Caco-2 (cell line): ENCODE measurements at regions of chr5 and their contacts with region 1.

Region 1: GRCh38 chr5:154647114-154647760 is 107.9 kb upstream of the LARP1 start:
- DNase-seq: peak; percentile 87 to 92
- H3K4me3 ChIP-seq: peak overlapping the region; percentile 15
- H3K4me3 Mint-ChIP-seq: peak overlapping the region; percentile 67
- H3K27ac Mint-ChIP-seq: peak overlapping the region; percentile 88
- H3K4me1 ChIP-seq: peaks cover 27% of the 10 kb centered on the region
- H3K4me1 Mint-ChIP-seq: peaks cover 17% of the 10 kb centered on the region
- H3K27me3 ChIP-seq: no peaks in the 10 kb centered on the region
- H3K27me3 Mint-ChIP-seq: no peaks in the 10 kb centered on the region
- CTCF ChIP-seq: no peak

Region 2: GRCh38 chr5:154683101-154683880 is 36.1 kb after region 1 on chr5:
- CTCF ChIA-PET with region 1: interaction called, 7 read pairs
- POLR2A ChIA-PET with region 1: interaction called, 13 read pairs
- intact Hi-C with region 1: no loop called
- DNase-seq: no peak
- H3K4me3 ChIP-seq: peak overlapping the region; percentile 58
- H3K4me3 Mint-ChIP-seq: peak overlapping the region; percentile 89
- H3K27ac Mint-ChIP-seq: peak overlapping the region; percentile 95
- H3K4me1 ChIP-seq: peaks cover 12% of the 10 kb centered on the region; the same call in 1 of the 2 replicates
- H3K4me1 Mint-ChIP-seq: peaks cover 11% of the 10 kb centered on the region
- H3K27me3 ChIP-seq: no peaks in the 10 kb centered on the region
- H3K27me3 Mint-ChIP-seq: no peaks in the 10 kb centered on the region
- CTCF ChIP-seq: no peak

Region 3: DNA sequence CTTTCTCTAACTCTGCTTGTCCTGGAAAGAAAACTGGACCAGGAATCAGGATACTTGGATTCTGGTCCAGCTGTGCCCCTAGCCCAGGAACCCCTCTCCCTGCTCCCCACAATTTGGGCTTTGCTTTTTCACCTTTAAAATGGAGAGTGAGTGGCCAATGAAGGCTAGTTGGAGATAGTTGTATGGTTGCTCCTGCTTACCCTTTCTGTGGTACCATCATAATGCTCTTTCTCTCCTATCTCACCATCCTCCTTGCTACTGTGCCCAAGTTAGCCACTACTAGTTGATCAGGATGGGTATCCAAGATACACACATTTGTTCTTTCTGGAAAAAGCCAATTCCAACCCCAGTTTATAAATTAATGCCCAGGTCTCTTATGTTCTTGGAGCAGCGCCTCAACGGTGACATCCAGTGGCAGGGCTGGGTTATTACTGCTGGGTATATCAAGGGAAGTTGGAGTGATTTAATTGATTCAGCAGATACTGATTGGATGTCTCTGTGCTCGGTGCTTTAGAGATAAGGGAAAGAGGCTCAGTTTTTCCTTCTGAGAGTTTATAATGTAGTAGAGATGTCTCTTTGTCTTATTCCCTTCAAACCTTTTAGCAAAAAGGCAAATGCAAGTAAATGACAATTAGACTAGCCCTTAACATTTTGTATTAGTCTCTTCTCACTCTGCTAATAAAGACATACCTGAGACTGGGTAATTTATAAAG is 164.6 kb after region 1 on chr5:
- CTCF ChIA-PET with region 1: interaction called, 3 read pairs
- POLR2A ChIA-PET with region 1: no interaction called
- intact Hi-C with region 1: loop called (anchors 1 kb)
- DNase-seq: peak; percentile 62 to 66
- H3K4me3 ChIP-seq: no peak overlapping the region
- H3K4me3 Mint-ChIP-seq: no peak overlapping the region
- H3K27ac Mint-ChIP-seq: peak overlapping the region; percentile 36
- H3K4me1 ChIP-seq: peaks cover 9% of the 10 kb centered on the region; the same call in 1 of the 2 replicates
- H3K4me1 Mint-ChIP-seq: peaks cover 10% of the 10 kb centered on the region
- H3K27me3 ChIP-seq: no peaks in the 10 kb centered on the region
- H3K27me3 Mint-ChIP-seq: no peaks in the 10 kb centered on the region
- CTCF ChIP-seq: peak; percentile 89 to 91

Region 4: GRCh38 chr5:154857530-154858296 is 210.5 kb after region 1 on chr5:
- CTCF ChIA-PET with region 1: interaction called, 7 read pairs
- POLR2A ChIA-PET with region 1: interaction called, 6 read pairs
- intact Hi-C with region 1: loop called (anchors 2 kb)
- DNase-seq: peak; percentile 93 to 95
- H3K4me3 ChIP-seq: peak overlapping the region; percentile 51
- H3K4me3 Mint-ChIP-seq: peak overlapping the region; percentile 94
- H3K27ac Mint-ChIP-seq: peak overlapping the region; percentile 95
- H3K4me1 ChIP-seq: peaks cover 7% of the 10 kb centered on the region
- H3K4me1 Mint-ChIP-seq: peaks cover 12% of the 10 kb centered on the region
- H3K27me3 ChIP-seq: no peaks in the 10 kb centered on the region
- H3K27me3 Mint-ChIP-seq: no peaks in the 10 kb centered on the region
- CTCF ChIP-seq: peak in 1 of 2 experiments; percentile 29

Region 5: DNA sequence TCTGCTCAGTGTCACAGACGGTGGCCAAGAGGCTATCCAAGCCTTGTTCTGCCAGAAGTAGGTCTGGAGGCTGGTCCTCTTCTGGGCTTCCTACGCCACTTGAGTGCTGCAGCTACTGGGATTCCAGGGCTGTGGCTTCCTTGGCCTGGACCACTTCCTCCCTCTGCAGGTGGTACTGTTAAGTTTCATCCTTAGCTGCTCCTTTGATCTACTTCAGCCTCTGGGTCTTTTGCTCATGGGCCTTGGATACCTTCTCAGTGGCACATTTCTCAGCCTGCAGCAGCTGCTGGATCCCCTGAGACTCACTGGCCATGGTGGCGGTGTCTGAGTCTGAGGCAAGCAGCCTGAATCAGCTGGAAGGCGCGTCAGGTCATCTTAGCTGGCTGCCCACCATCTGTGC is 221.5 kb after region 1 on chr5:
- CTCF ChIA-PET with region 1: interaction called, 7 read pairs
- POLR2A ChIA-PET with region 1: interaction called, 3 read pairs
- intact Hi-C with region 1: loop called (anchors 1 kb)
- DNase-seq: peak; percentile 66
- H3K4me3 ChIP-seq: no peak overlapping the region
- H3K4me3 Mint-ChIP-seq: no peak overlapping the region
- H3K27ac Mint-ChIP-seq: no peak overlapping the region
- H3K4me1 ChIP-seq: no peaks in the 10 kb centered on the region
- H3K4me1 Mint-ChIP-seq: no peaks in the 10 kb centered on the region
- H3K27me3 ChIP-seq: no peaks in the 10 kb centered on the region
- H3K27me3 Mint-ChIP-seq: no peaks in the 10 kb centered on the region
- CTCF ChIP-seq: peak in 1 of 2 experiments; percentile 62

Region 6: GRCh38 chr5:154940772-154941620 is 293.8 kb after region 1 on chr5 and contains the start of gene MRPL22:
- CTCF ChIA-PET with region 1: no interaction called
- POLR2A ChIA-PET with region 1: interaction called, 5 read pairs
- intact Hi-C with region 1: loop called (anchors 5 kb)
- DNase-seq: peak; percentile 93 to 95
- H3K4me3 ChIP-seq: peak within 1 kb of the TSS; percentile 65
- H3K4me3 Mint-ChIP-seq: peak within 1 kb of the TSS; percentile 93
- H3K27ac Mint-ChIP-seq: peak within 1 kb of the TSS; percentile 90
- H3K4me1 ChIP-seq: peaks cover 14% of the 10 kb centered on the region
- H3K4me1 Mint-ChIP-seq: peaks cover 14% of the 10 kb centered on the region
- H3K27me3 ChIP-seq: no peaks in the 10 kb centered on the region
- H3K27me3 Mint-ChIP-seq: no peaks in the 10 kb centered on the region
- CTCF ChIP-seq: no peak
- total RNA-seq, gene MRPL22: 84.8 and 87.8 TPM in 2 replicates

Region 7: GRCh38 chr5:155004138-155004744 is 357.0 kb after region 1 on chr5:
- CTCF ChIA-PET with region 1: no interaction called
- POLR2A ChIA-PET with region 1: no interaction called
- intact Hi-C with region 1: loop called (anchors 5 kb)
- DNase-seq: peak in 1 of 2 experiments; percentile 39
- H3K4me3 ChIP-seq: no peak overlapping the region
- H3K4me3 Mint-ChIP-seq: no peak overlapping the region
- H3K27ac Mint-ChIP-seq: no peak overlapping the region
- H3K4me1 ChIP-seq: no peaks in the 10 kb centered on the region
- H3K4me1 Mint-ChIP-seq: no peaks in the 10 kb centered on the region
- H3K27me3 ChIP-seq: no peaks in the 10 kb centered on the region; the same call in 1 of the 2 replicates
- H3K27me3 Mint-ChIP-seq: peaks cover 6% of the 10 kb centered on the region
- CTCF ChIP-seq: peak; percentile 48 to 50